ENCODE measurements at regions of chr9 and their contacts with region 1.

Region 1: DNA sequence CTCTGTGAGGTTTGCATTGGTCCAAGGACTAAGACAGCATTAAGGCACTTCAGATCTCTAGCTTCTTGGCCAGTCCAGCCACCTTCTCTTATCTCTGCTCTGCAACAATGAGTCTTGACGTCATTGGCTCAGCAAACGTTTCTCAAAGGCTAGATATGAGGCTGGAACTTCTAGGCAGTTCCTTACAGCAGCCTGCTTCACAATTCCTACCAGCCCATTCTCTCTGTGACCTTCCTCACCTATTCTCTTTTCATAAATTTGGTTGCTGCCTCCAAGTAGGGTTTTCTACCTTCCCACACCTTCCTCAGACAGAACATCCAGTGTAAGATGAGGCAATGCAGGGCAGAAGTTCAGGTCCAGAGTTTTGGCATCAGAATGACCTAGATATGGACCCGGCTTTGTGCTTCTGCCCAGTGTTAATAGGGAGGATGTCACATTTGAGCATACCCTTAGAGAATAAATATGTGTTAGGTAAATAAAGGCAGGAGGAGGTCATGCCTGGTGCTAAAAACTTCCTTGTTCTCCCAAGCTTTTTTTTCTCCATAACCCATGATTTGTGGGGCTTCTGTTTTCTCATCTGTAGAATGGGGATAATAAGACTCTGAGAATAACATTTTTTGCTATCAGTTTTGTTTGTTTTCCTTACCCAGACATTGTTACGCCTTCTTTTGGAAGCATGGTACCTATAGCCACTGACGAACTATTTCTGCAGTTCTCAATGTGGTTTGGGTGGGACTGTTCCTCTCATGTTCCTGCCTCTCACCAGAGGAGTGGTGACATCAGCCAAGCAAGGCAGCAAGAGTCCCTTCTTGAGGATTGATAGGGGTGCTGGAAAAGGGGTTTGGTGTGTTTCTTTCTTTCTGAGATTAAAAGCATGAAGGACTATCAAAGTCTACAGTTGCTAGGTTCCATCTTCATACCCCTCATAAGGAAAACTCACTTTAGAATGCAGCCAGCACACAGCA is 220.6 kb upstream of the TRIM32 start:
- DNase-seq: no peak
- ATAC-seq: no peak
- H3K4me3 ChIP-seq: no peak overlapping the region
- H3K27ac ChIP-seq: no peak overlapping the region
- H3K4me1 ChIP-seq: no peaks in the 10 kb centered on the region
- H3K27me3 ChIP-seq: no peaks in the 10 kb centered on the region

Region 2: GRCh38 chr9:116238225-116238624 is 228.3 kb before region 1 on chr9:
- intact Hi-C with region 1: no loop called
- DNase-seq: no peak
- ATAC-seq: no peak
- H3K4me3 ChIP-seq: no peak overlapping the region
- H3K27ac ChIP-seq: no peak overlapping the region
- H3K4me1 ChIP-seq: peaks cover 0 to 1% of the 10 kb centered on the region in 2 donors
- H3K27me3 ChIP-seq: no peaks in the 10 kb centered on the region

Region 3: GRCh38 chr9:116390306-116391228 is 76.0 kb before region 1 on chr9:
- intact Hi-C with region 1: no loop called
- DNase-seq: no peak
- ATAC-seq: no peak
- H3K4me3 ChIP-seq: no peak overlapping the region
- H3K27ac ChIP-seq: no peak overlapping the region
- H3K4me1 ChIP-seq: no peaks in the 10 kb centered on the region
- H3K27me3 ChIP-seq: no peaks in the 10 kb centered on the region

Region 4: GRCh38 chr9:116405321-116405720 is 61.2 kb before region 1 on chr9:
- intact Hi-C with region 1: no loop called
- DNase-seq: no peak
- ATAC-seq: no peak
- H3K4me3 ChIP-seq: no peak overlapping the region
- H3K27ac ChIP-seq: no peak overlapping the region
- H3K4me1 ChIP-seq: no peaks in the 10 kb centered on the region
- H3K27me3 ChIP-seq: no peaks in the 10 kb centered on the region

Region 5: DNA sequence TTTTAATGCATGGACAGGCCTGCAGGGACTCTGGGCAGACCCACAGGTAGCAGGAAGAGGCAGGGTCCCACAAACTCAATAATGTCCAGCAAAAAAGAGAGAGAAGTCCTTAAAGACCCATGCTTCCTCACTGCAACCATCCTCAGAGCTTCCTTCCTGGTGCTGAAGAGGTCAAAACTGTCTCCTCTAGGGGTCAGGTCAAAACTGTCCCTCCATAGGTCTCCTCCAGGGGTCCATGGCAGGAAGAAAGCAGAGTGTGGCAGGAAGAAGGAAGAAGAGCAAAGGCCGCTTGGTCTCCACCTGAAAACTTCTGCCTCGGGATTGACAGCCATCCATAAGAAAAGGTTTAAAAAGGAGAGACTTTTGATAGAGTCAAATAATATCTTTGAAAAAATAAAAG is 41.3 kb before region 1 on chr9:
- intact Hi-C with region 1: loop called in 1 of 2 experiments (anchors 2 kb)
- DNase-seq: no peak
- ATAC-seq: no peak
- H3K4me3 ChIP-seq: no peak overlapping the region
- H3K27ac ChIP-seq: no peak overlapping the region
- H3K4me1 ChIP-seq: no peaks in the 10 kb centered on the region
- H3K27me3 ChIP-seq: no peaks in the 10 kb centered on the region

Region 6: DNA sequence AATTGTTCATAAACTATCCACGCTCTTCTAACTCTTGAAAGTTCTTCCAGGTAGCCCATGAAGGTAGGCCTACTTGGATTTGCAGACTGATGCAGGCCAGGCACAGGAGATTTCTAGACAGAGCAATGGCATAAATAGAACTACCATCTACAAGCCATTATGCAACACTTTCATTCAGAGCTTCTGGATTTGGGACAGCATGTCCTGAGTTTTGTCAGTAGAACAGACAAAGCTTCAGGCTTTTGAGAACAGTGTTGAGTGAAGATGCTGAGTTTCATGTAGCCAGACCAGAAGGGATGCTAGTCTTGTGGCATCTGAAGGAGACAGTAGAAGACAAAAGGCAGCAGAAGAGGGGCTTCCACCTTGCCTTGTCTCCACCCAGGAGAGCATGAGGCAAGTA is 417.1 kb after region 1 on chr9:
- intact Hi-C with region 1: no loop called
- DNase-seq: no peak
- ATAC-seq: no peak
- H3K4me3 ChIP-seq: no peak overlapping the region
- H3K27ac ChIP-seq: no peak overlapping the region
- H3K4me1 ChIP-seq: no peaks in the 10 kb centered on the region
- H3K27me3 ChIP-seq: no peaks in the 10 kb centered on the region

Measured in aorta (tissue), 5 donors.